ENCODE measurements at regions of chr11 and their contacts with region 1.

Region 1: DNA sequence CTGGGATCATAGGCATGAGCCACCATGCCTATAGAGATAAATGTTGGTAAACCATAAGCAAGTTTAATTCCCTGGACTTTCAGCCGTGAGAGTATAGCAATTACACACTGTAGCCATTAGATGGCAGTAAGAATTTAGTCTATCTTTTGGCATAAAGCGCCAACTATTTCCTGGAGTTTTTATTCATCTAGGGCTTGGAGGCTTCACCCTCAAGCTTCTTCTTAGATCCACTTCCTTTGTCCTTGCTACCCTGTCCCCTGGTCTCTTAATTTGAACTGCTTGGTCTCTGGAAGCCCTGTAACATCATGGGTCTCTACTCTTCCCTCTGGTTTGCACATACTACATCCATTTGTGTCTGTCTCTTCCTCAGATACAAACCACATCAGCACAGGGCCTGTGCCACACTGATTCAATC is 38.2 kb downstream of the OR10A6 start:
- DNase-seq: no peak
- ATAC-seq: peak; percentile 84
- H3K4me3 ChIP-seq: no peak overlapping the region
- H3K27ac ChIP-seq: no peak overlapping the region
- H3K4me1 ChIP-seq: peaks cover 4% of the 10 kb centered on the region
- H3K27me3 ChIP-seq: no peaks in the 10 kb centered on the region
- CTCF ChIP-seq: peak; percentile 80

Region 2: GRCh38 chr11:7986768-7987559 is 94.1 kb after region 1 on chr11 and contains the start of gene EIF3F:
- intact Hi-C with region 1: loop called (anchors 10 kb)
- DNase-seq: peak; percentile 88
- ATAC-seq: peak; percentile 99
- H3K4me3 ChIP-seq: peak within 1 kb of the TSS; percentile 75
- H3K27ac ChIP-seq: peak within 1 kb of the TSS; percentile 84
- H3K4me1 ChIP-seq: peaks cover 33% of the 10 kb centered on the region
- H3K27me3 ChIP-seq: no peaks in the 10 kb centered on the region
- CTCF ChIP-seq: peak; percentile 87
- total RNA-seq, gene EIF3F: 200 TPM